Calu3 (cell line): ENCODE measurements at regions of chr3 and their contacts with region 1.

Region 1: GRCh38 chr3:14124615-14125190 is at the starts of genes CHCHD4 and TMEM43:
- DNase-seq: peak; percentile 95
- H3K4me3 Mint-ChIP-seq: peak within 1 kb of the TSS; percentile 97
- H3K27ac Mint-ChIP-seq: peak within 1 kb of the TSS; percentile 97
- H3K4me1 Mint-ChIP-seq: peaks cover 23% of the 10 kb centered on the region
- H3K27me3 Mint-ChIP-seq: no peaks in the 10 kb centered on the region
- CTCF ChIP-seq: no peak
- total RNA-seq, gene CHCHD4: 14.3 and 16.7 TPM in 2 replicates
- total RNA-seq, gene TMEM43: 56.2 and 57.0 TPM in 2 replicates

Region 2: GRCh38 chr3:13648060-13649001 is 476.4 kb before region 1 on chr3:
- CTCF ChIA-PET with region 1: no interaction called
- intact Hi-C with region 1: loop called (anchors 10 kb)
- DNase-seq: peak; percentile 89
- H3K4me3 Mint-ChIP-seq: no peak overlapping the region
- H3K27ac Mint-ChIP-seq: no peak overlapping the region
- H3K4me1 Mint-ChIP-seq: peaks cover 7% of the 10 kb centered on the region
- H3K27me3 Mint-ChIP-seq: peaks cover 63% of the 10 kb centered on the region
- CTCF ChIP-seq: peak; percentile 90

Region 3: DNA sequence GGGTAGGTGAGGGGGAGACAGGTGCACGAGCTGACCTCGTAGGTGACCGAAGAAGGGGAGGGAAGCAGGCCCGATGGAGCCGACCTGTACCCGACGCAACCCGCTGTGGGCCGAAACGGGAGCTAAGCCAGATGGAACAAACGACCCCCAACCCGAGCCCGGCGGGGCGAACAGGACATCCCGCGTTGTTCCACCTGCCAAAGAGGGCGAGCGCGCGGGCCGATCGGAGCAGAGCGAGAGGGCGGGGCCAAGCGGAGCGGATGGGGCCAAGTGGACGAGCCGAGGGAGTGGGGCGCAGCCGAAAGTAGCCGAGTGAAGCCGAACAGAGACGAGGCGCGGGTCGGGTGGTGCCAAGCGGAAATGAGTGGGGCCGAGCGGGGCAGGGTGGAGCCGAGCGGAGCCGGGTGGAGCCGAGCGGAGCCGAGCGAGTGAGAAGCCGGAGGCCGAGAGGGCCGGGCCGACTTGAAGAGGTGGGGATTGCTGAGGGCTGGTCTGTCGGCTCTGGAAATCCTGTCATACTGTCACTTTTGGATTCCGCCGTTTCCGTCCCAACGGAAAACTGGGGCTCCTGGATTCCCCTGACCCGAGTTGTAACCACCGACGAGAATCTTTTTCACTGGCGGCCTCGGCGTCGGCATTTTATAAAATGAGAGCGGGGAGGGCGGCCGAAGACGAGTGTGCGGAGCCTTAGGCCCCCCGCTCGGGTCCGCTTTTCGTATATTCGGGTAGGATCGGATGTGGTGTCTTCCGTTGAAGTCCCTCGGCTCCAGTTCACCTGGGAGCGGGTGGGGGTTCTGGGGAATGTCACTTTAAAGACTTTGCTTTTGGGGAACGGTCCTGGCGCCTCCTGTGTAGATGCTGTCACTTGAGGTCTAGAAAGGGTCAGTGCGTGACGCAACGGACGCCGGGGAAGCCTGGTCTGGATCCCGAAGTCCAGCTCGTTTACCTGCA is 229.3 kb before region 1 on chr3:
- CTCF ChIA-PET with region 1: interaction called, 28 read pairs
- intact Hi-C with region 1: loop called (anchors 2 kb)
- DNase-seq: peak; percentile 95
- H3K4me3 Mint-ChIP-seq: peak overlapping the region; percentile 84
- H3K27ac Mint-ChIP-seq: peak overlapping the region; percentile 36
- H3K4me1 Mint-ChIP-seq: peaks cover 11% of the 10 kb centered on the region
- H3K27me3 Mint-ChIP-seq: peaks cover 7% of the 10 kb centered on the region
- CTCF ChIP-seq: no peak

Region 4: DNA sequence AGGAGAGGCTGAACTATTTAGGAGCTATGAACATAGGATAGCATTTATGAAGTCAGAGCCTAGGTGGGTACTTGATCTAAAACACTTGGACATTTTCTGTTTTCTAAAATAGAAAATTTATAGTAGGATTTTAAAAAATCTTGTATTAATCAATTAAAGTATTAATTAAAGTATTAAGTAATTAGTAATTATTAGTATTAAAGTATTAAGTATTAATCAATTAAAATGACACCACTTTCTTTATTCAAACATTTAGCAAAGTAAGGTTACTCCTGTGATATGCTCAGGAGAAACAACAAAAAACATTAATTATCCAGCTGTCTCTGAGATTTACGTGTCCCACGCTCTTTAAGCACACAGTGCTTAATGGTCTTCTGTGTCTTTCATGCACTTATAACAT is 32.2 kb before region 1 on chr3:
- CTCF ChIA-PET with region 1: interaction called, 3 read pairs
- intact Hi-C with region 1: loop called (anchors 1 kb)
- DNase-seq: no peak
- H3K4me3 Mint-ChIP-seq: no peak overlapping the region
- H3K27ac Mint-ChIP-seq: peak overlapping the region; percentile 98
- H3K4me1 Mint-ChIP-seq: peaks cover 22% of the 10 kb centered on the region
- H3K27me3 Mint-ChIP-seq: no peaks in the 10 kb centered on the region
- CTCF ChIP-seq: no peak